ENCODE measurements at regions of chr9 and their contacts with region 1.

Region 1: DNA sequence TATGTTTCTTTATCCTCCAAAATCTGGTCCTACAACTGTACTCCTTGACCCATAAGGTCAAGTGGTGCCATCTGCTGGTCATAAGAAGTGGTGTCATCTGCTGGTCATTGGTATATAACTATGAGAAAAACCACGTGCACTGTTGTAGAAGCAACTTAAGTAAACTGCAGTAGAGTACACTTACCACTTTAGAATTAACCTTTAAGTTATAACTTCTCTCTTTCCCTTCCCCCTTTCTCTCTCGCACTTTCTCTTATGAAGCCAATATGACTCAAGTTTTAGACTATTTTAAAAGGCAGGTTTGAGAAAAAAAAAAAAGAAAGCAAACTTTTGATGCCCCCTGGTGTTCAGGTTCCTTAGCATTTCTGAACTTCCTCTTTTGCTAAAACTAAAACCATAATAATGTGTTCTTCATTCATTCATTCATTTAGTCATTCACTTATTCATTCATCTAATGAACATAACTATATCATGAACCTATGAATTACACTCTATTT is 12.8 kb upstream of the MTAP start:
- DNase-seq: no peak
- ATAC-seq: peak; percentile 90

Region 2: DNA sequence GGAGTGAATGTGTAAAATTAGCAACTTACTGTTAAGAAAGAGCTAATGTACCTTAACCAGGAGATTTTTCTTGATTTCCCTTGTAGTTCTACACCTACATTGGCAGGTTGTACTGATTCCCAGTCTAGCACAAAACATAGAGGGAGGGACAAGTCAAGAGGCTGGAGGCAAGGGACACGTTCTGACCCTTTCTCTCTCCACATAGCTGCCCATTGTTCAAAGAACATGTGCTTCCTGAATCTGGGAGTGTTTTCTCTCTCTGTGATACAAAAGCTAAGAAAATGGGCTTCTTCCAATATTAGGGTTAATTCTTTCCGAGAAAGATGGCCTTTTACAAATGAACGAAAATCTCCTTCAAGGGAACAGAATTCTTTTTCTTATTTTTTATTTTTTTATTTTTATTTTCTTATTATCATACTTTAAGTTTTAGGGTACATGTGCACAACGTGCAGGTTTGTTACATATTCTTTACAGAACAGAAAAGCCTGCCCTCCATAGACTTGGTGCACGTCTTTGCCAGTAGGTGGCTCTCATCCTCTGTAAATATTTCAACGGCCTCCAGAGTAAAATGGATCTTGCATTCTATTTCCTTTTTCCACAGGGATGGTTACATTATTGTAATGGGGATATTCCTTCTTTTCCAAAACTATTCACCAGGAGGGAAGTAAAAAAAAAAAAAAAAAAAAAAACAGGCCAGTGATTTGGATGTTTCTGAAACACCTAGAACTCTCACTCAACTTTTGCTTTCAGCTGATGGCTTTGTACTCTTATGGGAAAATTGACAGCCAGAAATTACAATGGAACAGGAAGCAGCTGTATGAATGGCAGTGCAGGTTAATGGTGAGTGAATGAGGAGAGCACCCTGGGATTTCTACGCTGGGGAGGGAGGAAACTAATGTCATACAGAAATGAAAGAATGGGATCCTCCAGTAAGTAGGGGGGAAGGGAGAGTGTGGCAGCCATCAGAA is 471.3 kb before region 1 on chr9:
- intact Hi-C with region 1: loop called (anchors 5 kb)
- DNase-seq: peak; percentile 21
- ATAC-seq: peak; percentile 64

Region 3: GRCh38 chr9:21840647-21841046 is 51.1 kb after region 1 on chr9:
- intact Hi-C with region 1: no loop called
- DNase-seq: no peak
- ATAC-seq: no peak